Activated CD4-positive, alpha-beta T cell treated with anti-CD3 and anti-CD28 coated beads for 36 hours (primary cell): ENCODE measurements at regions of chr17 and their contacts with region 1.

Region 1: GRCh38 chr17:41966463-41967140 is at the start of gene CNP:
- DNase-seq: peak; percentile 95
- ATAC-seq: peak; percentile 75
- H3K4me3 Mint-ChIP-seq: peak within 1 kb of the TSS; percentile 79
- H3K27ac Mint-ChIP-seq: peak within 1 kb of the TSS; percentile 82
- H3K4me1 Mint-ChIP-seq: peaks cover 36% of the 10 kb centered on the region
- H3K27me3 Mint-ChIP-seq: no peaks in the 10 kb centered on the region
- total RNA-seq, gene CNP: 55.1 to 77.0 TPM

Region 2: DNA sequence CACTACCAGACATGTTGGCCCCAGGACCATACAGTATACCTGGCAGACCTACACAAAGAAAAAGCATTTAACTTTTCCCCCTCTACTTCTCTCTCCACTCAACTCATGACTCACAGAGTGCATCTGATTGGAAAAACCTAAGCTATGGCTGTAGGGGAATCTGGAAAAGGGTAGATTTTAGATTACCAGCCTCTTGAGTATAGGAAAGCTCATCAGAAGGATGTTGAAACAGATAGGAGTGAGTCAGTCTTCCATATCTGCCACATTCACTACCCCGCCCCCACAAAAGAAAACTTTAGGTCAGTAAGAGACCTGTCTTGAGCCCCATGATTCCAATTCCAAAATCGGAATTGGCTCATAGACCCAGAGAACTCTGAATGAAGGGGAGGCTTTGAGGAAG is 407.1 kb before region 1 on chr17:
- CTCF ChIA-PET with region 1: no interaction called
- POLR2A ChIA-PET with region 1: no interaction called
- intact Hi-C with region 1: no loop called
- DNase-seq: no peak
- ATAC-seq: no peak
- H3K4me3 Mint-ChIP-seq: no peak overlapping the region
- H3K27ac Mint-ChIP-seq: no peak overlapping the region
- H3K4me1 Mint-ChIP-seq: no peaks in the 10 kb centered on the region
- H3K27me3 Mint-ChIP-seq: peaks cover 30% of the 10 kb centered on the region

Region 3: DNA sequence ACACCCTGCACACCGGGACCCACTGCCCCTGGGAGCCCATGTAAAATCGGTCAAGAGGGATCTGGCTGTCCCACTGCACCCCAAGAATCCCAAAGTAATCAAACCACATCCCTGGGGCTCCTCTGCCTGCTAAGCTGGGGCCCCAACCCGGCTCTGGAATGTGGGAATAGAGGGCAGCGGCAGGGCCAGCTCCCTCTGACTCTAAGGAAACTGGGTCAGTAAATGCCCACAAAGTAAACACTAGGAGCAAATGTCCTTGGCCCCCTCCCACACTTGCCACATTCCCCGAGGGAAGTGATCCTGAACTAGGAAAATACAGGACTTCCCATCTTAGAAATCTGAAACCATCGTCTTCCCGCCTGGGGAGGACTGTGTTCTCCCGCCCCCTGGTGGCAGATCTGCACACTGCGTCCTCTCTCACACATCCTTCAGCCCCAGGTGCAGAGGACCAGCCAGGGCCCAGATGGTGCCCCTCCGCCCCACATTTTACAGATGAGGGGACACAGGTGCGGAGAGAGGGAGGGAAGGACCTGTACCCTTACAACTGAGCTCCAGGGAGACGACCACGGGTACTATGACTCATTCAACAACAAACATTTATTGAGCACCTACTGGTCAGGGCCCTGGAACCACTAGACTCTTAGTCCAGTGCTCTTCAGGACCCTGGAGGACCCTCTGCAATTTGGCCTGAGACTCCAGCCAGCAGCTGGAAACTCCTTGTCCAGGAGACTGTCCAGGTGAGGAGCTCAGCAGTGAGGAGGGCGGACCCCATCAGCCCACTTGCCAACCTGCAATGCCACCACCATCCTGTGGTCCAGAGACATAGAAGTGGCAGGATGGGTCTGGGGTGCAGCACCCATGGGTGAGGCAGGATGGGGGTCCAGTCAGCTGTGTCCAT is 165.0 kb before region 1 on chr17:
- CTCF ChIA-PET with region 1: no interaction called
- POLR2A ChIA-PET with region 1: no interaction called
- intact Hi-C with region 1: no loop called
- DNase-seq: peak; percentile 86
- ATAC-seq: peak; percentile 95
- H3K4me3 Mint-ChIP-seq: no peak overlapping the region
- H3K27ac Mint-ChIP-seq: no peak overlapping the region
- H3K4me1 Mint-ChIP-seq: peaks cover 4% of the 10 kb centered on the region
- H3K27me3 Mint-ChIP-seq: no peaks in the 10 kb centered on the region

Region 4: DNA sequence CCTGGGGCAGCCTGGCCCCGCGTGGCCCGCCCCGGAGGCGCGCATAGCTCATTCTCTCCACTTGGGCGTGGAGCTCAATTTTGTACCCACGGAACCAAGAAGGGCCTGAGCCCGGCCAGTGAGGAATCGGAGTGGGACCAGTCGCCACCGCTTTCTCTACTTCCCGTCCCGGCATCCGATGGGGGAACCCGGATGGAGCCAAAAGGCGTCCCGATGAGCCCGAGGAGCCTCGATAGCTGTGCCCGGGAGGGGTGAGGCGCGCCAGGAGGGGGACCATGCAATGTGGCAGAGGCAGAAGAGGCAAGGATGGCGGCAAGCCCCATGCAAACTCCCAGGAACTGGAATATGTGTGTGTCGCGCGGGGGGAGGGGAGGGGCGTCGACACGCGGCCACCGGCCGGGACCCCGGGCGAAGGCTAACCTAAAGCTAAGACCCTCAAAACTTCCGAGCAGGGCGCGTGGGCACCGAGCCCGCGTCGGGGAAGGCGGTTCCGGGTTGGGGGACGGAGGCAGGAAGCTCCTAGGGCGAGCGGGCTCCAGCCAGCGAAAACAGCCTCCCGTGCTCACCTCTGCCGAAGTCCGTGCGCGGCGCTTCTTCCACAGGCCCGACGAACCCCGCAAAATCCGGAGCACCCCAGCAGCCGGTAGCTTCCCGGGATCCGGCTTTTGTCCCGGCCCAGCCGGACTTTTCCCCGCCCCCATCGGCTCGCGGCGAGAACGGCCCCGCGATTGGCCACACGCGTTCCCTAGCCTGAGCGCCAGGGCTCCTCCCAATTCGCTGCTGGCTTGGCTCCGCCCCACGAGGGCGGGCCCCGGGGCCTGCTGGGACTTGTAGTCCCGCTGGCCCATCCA is 48.1 kb before region 1 on chr17 and contains the start of gene ACLY:
- CTCF ChIA-PET with region 1: no interaction called
- POLR2A ChIA-PET with region 1: interaction called, 7 read pairs
- intact Hi-C with region 1: loop called in 1 of 2 experiments (anchors 1 kb)
- DNase-seq: peak; percentile 98
- ATAC-seq: peak; percentile 99
- H3K4me3 Mint-ChIP-seq: peak within 1 kb of the TSS; percentile 90
- H3K27ac Mint-ChIP-seq: peak within 1 kb of the TSS; percentile 80
- H3K4me1 Mint-ChIP-seq: peaks cover 37% of the 10 kb centered on the region
- H3K27me3 Mint-ChIP-seq: no peaks in the 10 kb centered on the region
- total RNA-seq, gene ACLY: 189 to 192 TPM

Region 5: DNA sequence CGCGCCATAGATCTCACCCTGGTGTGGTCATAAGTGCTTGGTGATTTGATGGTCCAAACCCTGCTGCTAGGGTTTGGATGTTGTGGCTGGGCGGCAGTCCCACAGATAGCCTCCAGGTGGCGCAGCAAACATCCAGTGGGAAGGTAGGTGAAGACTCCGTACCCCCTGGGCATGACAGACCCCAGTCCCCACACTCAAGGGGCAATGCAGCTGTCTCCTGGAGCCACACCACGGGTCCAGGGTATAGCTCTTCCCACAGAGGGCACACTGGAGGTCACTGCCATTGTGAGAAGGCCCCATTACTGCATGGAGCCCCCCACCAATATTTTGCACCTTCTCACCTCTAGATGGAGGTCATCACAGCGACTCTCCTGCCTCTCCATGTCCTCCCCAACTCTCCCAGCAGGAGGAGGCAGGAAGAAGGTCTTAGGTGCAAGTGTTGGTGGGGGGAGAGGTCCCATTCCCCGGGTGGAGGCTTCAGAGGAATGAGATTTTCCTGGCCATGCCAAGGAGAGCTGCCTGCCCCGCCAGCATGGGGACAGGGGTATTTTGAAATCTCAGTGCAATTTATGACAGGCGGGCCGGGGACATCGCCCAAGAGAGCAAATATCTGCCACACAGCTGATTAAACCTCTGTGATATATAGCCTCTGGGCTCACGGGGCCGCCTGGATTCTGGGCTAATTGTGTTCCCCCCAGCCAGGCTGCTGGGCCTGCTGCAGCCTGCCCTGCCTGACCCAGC is 100.9 kb after region 1 on chr17:
- CTCF ChIA-PET with region 1: interaction called, 3 read pairs
- POLR2A ChIA-PET with region 1: no interaction called
- intact Hi-C with region 1: loop called in 1 of 2 experiments (anchors 1 kb)
- DNase-seq: peak; percentile 85
- ATAC-seq: peak; percentile 62
- H3K4me3 Mint-ChIP-seq: no peak overlapping the region
- H3K27ac Mint-ChIP-seq: no peak overlapping the region
- H3K4me1 Mint-ChIP-seq: peaks cover 21% of the 10 kb centered on the region
- H3K27me3 Mint-ChIP-seq: peaks cover 9% of the 10 kb centered on the region

Region 6: GRCh38 chr17:42112552-42113176 is 146.1 kb after region 1 on chr17 and contains the start of gene DHX58:
- CTCF ChIA-PET with region 1: interaction called, 19 read pairs
- POLR2A ChIA-PET with region 1: interaction called, 7 read pairs
- intact Hi-C with region 1: loop called (anchors 1 to 2 kb)
- DNase-seq: peak; percentile 89
- ATAC-seq: peak; percentile 86
- H3K4me3 Mint-ChIP-seq: peak within 1 kb of the TSS; percentile 77
- H3K27ac Mint-ChIP-seq: peak within 1 kb of the TSS; percentile 97
- H3K4me1 Mint-ChIP-seq: peaks cover 35% of the 10 kb centered on the region
- H3K27me3 Mint-ChIP-seq: no peaks in the 10 kb centered on the region
- total RNA-seq, gene DHX58: 23.8 to 31.1 TPM

Region 7: GRCh38 chr17:42132941-42133340 is 166.3 kb after region 1 on chr17:
- CTCF ChIA-PET with region 1: no interaction called
- POLR2A ChIA-PET with region 1: interaction called, 10 read pairs
- intact Hi-C with region 1: no loop called
- DNase-seq: peak; percentile 71
- ATAC-seq: peak; percentile 84
- H3K4me3 Mint-ChIP-seq: no peak overlapping the region
- H3K27ac Mint-ChIP-seq: peak overlapping the region; percentile 89
- H3K4me1 Mint-ChIP-seq: peaks cover 54% of the 10 kb centered on the region
- H3K27me3 Mint-ChIP-seq: no peaks in the 10 kb centered on the region

Region 8: GRCh38 chr17:42405963-42406495 is 439.4 kb after region 1 on chr17:
- CTCF ChIA-PET with region 1: no interaction called
- POLR2A ChIA-PET with region 1: no interaction called
- intact Hi-C with region 1: loop called in 1 of 2 experiments (anchors 5 kb)
- DNase-seq: peak; percentile 91
- ATAC-seq: peak; percentile 69
- H3K4me3 Mint-ChIP-seq: no peak overlapping the region
- H3K27ac Mint-ChIP-seq: no peak overlapping the region
- H3K4me1 Mint-ChIP-seq: peaks cover 19% of the 10 kb centered on the region
- H3K27me3 Mint-ChIP-seq: no peaks in the 10 kb centered on the region

Region 9: DNA sequence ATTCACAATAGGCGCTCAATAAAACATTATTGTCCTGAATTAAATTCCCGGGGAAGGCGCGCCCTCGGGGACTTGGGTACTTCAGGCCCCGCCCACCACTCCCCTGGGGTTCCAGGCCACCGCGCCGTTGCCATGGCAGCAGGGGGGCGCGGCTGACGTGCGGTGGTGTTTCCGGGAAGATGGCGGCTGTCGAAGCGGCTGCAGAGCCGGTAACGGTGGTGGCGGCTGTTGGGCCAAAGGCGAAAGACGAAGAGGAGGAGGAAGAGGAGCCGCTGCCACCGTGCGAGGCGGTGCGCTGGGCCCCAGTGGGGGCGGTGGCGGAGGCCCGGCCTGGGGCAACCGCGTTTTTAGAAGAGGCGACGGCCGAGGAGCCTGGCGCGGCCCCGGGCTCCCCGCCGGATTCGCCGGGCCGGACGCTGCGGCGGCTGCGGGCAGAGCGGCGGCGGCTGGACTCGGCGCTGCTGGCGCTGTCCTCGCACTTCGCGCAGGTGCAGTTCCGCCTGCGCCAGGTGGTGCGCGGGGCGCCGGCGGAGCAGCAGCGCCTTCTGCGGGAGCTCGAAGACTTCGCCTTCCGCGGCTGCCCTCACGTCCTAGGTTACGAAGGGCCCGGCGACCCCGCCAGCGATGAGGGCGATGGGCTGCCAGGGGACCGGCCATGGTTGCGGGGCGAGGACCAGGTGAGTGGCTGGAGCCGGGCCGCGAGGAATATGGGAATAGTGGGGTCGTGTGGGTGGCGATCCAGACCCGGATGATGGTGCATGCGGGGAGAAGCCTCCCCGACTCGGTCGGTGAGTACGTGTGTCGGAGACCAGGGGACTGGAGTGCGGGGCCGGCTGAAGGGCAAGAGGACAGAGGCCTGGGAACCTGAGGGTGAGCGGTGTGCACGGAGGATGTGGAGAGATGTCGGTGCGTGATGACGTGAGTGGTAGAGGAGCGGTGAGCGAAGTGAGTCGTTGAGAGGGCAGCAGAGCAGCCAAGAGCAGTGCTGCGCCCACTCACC is 1014.1 kb after region 1 on chr17 and contains the start of gene RUNDC1:
- CTCF ChIA-PET with region 1: no interaction called
- POLR2A ChIA-PET with region 1: no interaction called
- intact Hi-C with region 1: loop called in 1 of 2 experiments (anchors 5 kb)
- DNase-seq: peak; percentile 95
- ATAC-seq: peak; percentile 87
- H3K4me3 Mint-ChIP-seq: peak within 1 kb of the TSS; percentile 99
- H3K27ac Mint-ChIP-seq: peak within 1 kb of the TSS; percentile 98
- H3K4me1 Mint-ChIP-seq: peaks cover 32% of the 10 kb centered on the region
- H3K27me3 Mint-ChIP-seq: no peaks in the 10 kb centered on the region
- total RNA-seq, gene RUNDC1: 12.3 to 12.5 TPM